Activated B cell treated with CpG ODN at 0.5 μM for 24 hours (primary cell): ENCODE measurements at regions of chr1 and their contacts with region 1.

Region 1: DNA sequence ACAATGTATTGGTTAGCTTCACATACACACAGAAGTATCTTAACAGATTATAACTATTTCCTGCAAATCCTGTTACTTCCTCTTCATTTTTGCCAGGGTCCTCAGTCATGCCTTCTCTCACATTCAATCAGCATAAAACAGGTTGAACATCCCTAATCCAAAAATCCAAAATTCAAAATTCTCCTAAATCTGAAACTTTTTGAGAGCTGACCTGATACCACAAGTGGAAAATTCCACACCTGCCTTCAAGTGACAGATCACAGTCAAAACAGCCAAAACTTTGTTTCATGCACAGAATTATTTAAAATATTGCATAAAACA is 62.9 kb upstream of the FBXO28 start:
- DNase-seq: no peak
- ATAC-seq: no peak
- H3K4me3 Mint-ChIP-seq: no peak overlapping the region
- H3K27ac Mint-ChIP-seq: no peak overlapping the region
- H3K4me1 Mint-ChIP-seq: peaks cover 3% of the 10 kb centered on the region
- H3K27me3 Mint-ChIP-seq: peaks cover 17% of the 10 kb centered on the region
- CTCF ChIP-seq: no peak

Region 2: GRCh38 chr1:223700942-223701637 is 350.0 kb before region 1 on chr1:
- CTCF ChIA-PET with region 1: interaction called, 4 read pairs
- POLR2A ChIA-PET with region 1: no interaction called
- intact Hi-C with region 1: loop called (anchors 1 kb)
- DNase-seq: no peak
- ATAC-seq: no peak
- H3K4me3 Mint-ChIP-seq: no peak overlapping the region
- H3K27ac Mint-ChIP-seq: no peak overlapping the region
- H3K4me1 Mint-ChIP-seq: peaks cover 9% of the 10 kb centered on the region
- H3K27me3 Mint-ChIP-seq: peaks cover 13% of the 10 kb centered on the region
- CTCF ChIP-seq: no peak

Region 3: DNA sequence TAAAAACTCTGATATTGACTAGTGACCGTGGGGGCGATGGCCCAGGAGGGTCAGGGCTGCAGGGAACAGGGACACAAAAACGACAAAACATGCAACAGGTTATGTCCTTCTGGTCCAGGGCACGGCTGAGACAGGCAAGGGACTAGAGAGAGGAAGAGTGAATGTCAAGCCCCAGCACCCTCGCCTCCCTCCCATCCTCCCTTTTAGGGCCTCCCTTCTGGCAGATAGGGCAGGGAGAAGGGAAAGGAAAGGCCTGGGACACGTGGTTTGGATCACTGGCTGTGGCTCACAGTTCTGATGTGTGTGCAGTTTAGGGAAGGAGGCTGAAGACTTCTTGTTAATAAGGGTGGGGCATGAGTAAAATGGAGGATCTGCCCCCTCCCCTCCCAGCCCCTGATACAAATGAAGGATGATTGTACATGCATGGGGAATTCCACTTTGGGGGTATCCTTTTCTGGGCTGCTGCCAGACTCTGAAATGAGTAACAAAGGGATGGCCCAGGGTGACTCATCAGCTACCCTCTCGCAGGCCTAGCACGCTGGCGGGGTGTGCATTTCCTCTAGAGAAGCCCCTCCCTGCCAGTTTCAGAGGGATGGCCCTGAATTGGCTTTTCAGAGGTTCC is 324.6 kb before region 1 on chr1:
- CTCF ChIA-PET with region 1: no interaction called
- POLR2A ChIA-PET with region 1: interaction called, 14 read pairs
- intact Hi-C with region 1: no loop called
- DNase-seq: peak; percentile 45
- ATAC-seq: peak; percentile 97
- H3K4me3 Mint-ChIP-seq: peak overlapping the region; percentile 39
- H3K27ac Mint-ChIP-seq: peak overlapping the region; percentile 78
- H3K4me1 Mint-ChIP-seq: peaks cover 40% of the 10 kb centered on the region
- H3K27me3 Mint-ChIP-seq: no peaks in the 10 kb centered on the region
- CTCF ChIP-seq: no peak

Region 4: DNA sequence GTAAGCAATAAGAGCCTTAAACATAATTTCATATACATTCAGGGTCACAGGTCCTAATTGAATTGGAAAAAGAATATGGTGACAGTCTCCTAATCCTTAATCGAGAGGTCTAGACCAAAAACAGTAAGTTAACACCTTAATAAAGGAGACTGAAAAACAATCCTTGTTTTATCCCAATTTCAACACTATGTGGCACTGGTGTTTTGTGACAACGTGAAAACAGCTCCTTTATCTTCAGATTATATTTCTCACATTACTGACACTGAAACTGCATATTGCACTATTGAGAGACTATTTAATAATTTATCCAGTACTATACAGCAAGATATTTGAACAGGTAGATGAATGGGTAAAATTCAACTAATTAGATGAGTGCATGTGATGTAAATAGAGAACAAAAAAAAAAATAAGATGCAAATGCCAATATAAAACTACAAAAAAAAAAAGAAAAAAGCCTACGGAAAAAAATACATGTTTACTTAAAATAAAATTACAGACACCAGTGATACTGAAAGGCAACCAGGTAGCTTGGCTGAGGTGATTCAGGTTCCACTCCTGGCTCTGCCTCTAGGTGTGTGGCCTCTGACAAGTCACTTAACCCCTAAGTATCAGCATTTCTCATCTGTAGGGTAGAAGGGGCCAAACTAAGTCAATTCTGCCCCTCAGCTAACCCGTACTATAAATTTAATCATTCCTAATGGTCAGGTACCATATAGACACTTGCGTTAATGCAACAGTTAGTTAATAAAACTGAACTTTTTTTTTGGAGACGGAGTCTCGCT is 239.2 kb before region 1 on chr1:
- CTCF ChIA-PET with region 1: interaction called, 14 read pairs
- POLR2A ChIA-PET with region 1: no interaction called
- intact Hi-C with region 1: no loop called
- DNase-seq: no peak
- ATAC-seq: peak; percentile 42
- H3K4me3 Mint-ChIP-seq: no peak overlapping the region
- H3K27ac Mint-ChIP-seq: no peak overlapping the region
- H3K4me1 Mint-ChIP-seq: peaks cover 13% of the 10 kb centered on the region
- H3K27me3 Mint-ChIP-seq: no peaks in the 10 kb centered on the region
- CTCF ChIP-seq: no peak